Prostate gland (tissue), 2 donors: ENCODE measurements at regions of chr1 and their contacts with region 1.

Region 1: GRCh38 chr1:157490467-157491165 is 61.7 kb downstream of the FCRL5 start:
- DNase-seq: peak; percentile 55
- H3K4me3 ChIP-seq: no peak overlapping the region
- H3K27ac ChIP-seq: no peak overlapping the region
- H3K4me1 ChIP-seq: no peaks in the 10 kb centered on the region
- H3K27me3 ChIP-seq: peaks cover 2% of the 10 kb centered on the region
- CTCF ChIP-seq: peak; percentile 18 to 58 (median 44)
- POLR2A ChIP-seq: no peak

Region 2: DNA sequence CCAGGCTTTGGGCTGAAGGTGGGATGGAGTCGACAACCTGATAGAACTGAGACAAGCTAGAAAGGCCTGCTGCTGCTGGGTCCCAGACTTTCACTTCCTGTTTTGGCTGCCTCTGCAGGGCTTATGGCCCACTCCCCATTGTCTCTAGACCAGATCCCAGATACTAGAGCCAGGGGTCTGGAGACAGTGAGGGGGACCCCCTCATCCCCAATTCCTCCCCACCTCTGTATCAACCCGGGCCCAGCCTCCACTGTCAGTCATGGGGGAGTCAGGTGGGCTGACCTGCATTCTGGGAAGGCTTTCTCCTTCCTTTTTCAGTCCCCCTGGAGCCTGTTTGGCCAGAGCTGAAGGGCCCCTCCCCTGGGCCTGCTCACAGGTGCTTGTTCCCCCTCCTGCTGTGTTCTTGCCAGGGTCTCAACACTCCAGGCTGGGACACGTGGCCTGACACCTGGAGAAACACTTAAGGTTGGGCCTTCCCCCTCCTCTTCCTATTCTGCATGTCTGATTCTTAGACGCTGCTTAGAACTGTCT is 373.0 kb before region 1 on chr1:
- intact Hi-C with region 1: no loop called
- DNase-seq: no peak
- H3K4me3 ChIP-seq: no peak overlapping the region
- H3K27ac ChIP-seq: no peak overlapping the region
- H3K4me1 ChIP-seq: no peaks in the 10 kb centered on the region
- H3K27me3 ChIP-seq: no peaks in the 10 kb centered on the region
- CTCF ChIP-seq: no peak
- POLR2A ChIP-seq: no peak

Region 3: DNA sequence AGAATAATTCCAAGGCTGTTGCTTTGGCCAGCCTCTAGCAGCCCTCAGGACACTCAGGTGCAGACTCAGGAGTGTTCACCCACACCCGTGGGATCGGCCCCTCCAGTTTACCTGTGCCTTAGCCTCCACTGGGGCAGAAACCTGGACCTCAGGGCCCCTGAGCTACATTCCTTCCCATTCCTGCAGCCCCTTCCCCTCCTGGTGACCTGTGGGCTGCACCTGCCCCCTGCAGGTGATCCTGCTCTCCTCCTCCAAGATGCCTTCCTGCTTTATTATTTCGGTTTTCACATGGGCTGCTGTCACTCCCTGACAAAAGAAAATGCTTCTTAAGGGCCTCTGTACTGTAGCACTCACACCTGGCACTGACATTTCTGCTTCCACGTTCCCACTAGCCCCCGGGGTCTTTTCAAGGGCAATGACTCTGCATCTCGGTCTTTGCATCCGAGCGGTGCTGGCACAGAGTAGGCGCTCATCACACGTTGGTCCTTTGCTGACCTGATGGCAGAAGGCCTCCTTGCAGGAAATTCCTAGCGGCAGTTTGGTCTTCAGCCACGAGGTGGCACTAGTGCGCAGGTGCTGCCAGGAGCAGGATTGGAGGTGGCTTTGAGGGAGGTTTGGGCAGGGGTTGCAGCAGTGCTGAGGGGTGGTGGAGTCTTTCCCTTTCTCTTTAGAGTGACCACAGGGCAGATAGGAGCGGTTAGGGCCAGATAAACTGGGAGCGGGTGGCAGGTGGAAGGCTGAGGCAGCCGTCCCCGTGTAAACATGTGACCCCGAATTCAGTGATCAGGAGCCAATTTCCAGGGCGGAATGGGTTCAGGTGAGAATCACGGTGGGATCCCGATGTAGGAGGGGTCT is 327.1 kb before region 1 on chr1:
- intact Hi-C with region 1: loop called (anchors 5 kb)
- DNase-seq: peak; percentile 34
- H3K4me3 ChIP-seq: no peak overlapping the region
- H3K27ac ChIP-seq: no peak overlapping the region
- H3K4me1 ChIP-seq: no peaks in the 10 kb centered on the region
- H3K27me3 ChIP-seq: no peaks in the 10 kb centered on the region
- CTCF ChIP-seq: peak; percentile 47 to 72 (median 66)
- POLR2A ChIP-seq: no peak

Region 4: GRCh38 chr1:157532569-157532968 is 42.0 kb after region 1 on chr1:
- intact Hi-C with region 1: no loop called
- DNase-seq: no peak
- H3K4me3 ChIP-seq: no peak overlapping the region
- H3K27ac ChIP-seq: no peak overlapping the region
- H3K4me1 ChIP-seq: no peaks in the 10 kb centered on the region
- H3K27me3 ChIP-seq: no peaks in the 10 kb centered on the region
- CTCF ChIP-seq: no peak
- POLR2A ChIP-seq: no peak

Region 5: DNA sequence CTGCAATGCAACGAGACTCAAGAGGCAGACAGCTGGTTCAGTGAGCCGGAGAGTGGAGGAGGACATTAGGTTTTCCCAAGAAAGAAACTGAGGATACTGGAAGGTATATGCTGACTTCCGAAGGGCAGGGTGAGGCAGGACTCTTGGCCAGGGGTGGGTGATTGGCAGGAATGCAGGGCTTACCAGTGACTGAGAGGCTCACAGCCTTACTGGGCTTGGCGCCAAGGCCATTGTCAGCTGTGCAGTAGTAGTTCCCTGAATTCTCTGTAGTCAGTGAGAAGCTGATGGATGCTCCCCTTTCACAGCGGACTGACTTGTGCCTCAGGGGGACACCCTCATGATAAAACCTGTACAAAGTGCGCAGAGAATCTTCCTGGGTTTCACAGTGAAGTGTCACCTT is 52.1 kb after region 1 on chr1:
- intact Hi-C with region 1: no loop called
- DNase-seq: no peak
- H3K4me3 ChIP-seq: no peak overlapping the region
- H3K27ac ChIP-seq: no peak overlapping the region
- H3K4me1 ChIP-seq: no peaks in the 10 kb centered on the region
- H3K27me3 ChIP-seq: no peaks in the 10 kb centered on the region
- CTCF ChIP-seq: no peak
- POLR2A ChIP-seq: no peak